ENCODE measurements at regions of chr13 and their contacts with region 1.

Region 1: DNA sequence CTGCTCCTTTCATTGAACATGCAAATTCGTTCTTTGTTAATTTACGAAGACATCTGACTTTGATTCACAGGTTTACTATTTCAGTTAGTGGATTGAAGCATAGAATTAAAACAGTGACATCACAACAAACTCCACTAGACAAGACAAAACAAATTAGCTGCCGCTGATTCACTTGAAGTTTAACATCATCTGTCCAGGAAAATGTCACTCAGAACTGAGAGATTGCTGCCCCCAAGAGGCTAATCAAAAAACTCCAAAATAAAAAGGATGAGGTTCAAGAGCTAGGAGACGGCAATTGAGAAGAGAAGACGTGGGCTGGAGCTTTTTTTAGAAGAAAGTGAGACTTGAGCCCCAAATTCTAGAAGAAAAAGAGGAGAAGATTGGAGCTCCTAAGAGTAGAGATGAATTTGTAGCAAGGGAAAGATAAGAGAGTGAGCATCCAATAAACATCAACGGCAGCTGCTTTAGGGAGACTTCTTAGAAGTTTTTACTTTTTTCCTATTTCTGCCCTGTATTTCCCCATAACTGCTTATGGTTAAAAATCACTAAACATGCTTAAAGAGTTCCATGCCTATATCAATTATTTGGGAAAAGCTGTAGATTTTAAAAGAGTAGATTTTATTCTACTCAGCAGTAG is 40.8 kb upstream of the TPP2 start:
- DNase-seq: peak; percentile 22
- CTCF ChIP-seq: peak; percentile 50

Region 2: DNA sequence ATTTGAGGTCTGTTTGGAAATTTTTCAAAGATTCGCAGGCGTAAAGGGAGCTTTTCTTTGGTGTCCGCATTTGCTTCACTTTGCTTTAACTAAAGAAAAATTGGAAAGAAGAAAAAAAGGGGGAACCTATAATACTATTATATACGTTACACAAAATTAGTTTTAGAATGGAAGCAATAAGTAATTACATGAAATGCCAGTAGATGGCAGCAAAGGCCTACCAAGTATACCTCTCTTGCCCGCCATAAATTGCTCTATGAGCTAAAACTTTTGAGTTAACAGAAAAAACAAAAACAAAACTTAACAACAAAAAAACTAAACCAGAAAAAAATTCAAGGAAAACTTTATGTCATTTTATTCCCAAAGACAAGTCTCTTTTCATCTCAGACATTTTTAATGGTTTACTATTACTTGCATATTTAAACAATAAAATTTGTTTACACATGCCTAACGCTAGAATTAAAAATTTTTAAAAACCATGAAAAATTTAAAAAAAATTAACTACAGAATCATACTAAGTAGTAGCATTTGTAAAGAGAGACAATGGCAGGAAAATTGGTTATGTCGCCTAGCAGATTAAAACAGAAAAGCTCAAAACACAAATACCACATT is 1411.1 kb before region 1 on chr13:
- CTCF ChIA-PET with region 1: interaction called, 13 read pairs
- POLR2A ChIA-PET with region 1: no interaction called
- DNase-seq: peak; percentile 31
- CTCF ChIP-seq: peak; percentile 65

Region 3: DNA sequence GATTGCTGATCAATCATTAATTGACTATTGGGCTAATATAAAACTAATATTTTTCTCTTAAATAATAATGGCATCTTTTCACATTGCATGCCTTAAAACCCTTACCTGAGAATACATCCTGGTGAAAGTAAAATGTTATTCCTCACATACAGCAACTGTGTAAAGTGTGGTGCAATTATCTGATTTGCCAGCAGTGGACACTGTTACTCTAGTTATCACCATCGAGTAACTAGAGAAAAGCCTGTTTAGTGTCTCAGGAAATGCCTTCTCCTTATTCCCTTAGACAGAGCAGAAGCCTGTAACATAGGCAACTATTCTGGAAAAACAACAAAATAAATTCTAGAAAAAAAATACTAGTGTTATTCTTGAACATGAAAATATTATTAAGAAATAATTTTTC is 614.0 kb before region 1 on chr13:
- CTCF ChIA-PET with region 1: interaction called, 12 read pairs
- POLR2A ChIA-PET with region 1: no interaction called
- DNase-seq: no peak
- CTCF ChIP-seq: peak; percentile 46

Region 4: GRCh38 chr13:102141625-102142472 is 414.2 kb before region 1 on chr13:
- CTCF ChIA-PET with region 1: interaction called, 15 read pairs
- POLR2A ChIA-PET with region 1: no interaction called
- DNase-seq: peak; percentile 9
- CTCF ChIP-seq: peak; percentile 60

Region 5: DNA sequence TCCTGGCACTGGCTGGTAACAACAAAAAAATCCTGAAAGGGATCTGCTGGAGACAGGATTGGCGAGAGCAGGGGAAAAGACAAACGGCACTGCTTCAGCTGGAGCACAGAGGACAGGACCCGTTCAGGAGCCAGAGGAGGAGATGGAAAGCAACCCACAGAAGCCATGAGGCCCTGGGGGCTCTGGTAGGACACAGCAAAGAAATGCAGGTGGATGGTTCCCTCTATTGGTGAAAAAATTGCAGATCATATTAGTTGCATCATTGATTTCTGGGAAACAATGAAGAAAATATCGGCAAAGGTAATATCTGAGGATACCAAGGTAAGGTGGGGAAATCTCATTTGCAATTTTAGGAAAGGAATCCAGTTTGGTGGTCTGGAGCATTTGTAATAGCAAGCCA is 15.0 kb after region 1 on chr13:
- CTCF ChIA-PET with region 1: interaction called, 21 read pairs
- POLR2A ChIA-PET with region 1: no interaction called
- DNase-seq: no peak
- CTCF ChIP-seq: no peak

Region 6: GRCh38 chr13:102854675-102855074 is 298.6 kb after region 1 on chr13:
- CTCF ChIA-PET with region 1: no interaction called
- POLR2A ChIA-PET with region 1: no interaction called
- DNase-seq: no peak
- CTCF ChIP-seq: no peak

Measured in GM10248 (cell line).